ENCODE measurements at regions of chr12 and their contacts with region 1.

Region 1: GRCh38 chr12:401235-402028 is at the start of gene CCDC77:
- DNase-seq: peak; percentile 90
- H3K4me3 ChIP-seq: peak within 1 kb of the TSS; percentile 72 to 79 (median 76)
- H3K27ac ChIP-seq: peak within 1 kb of the TSS; percentile 67
- H3K4me1 ChIP-seq: peaks cover 4% of the 10 kb centered on the region
- H3K27me3 ChIP-seq: no peaks in the 10 kb centered on the region
- CTCF ChIP-seq: peak in 1 of 2 donors; percentile 46
- total RNA-seq, gene CCDC77: 5.3 to 8.8 TPM

Region 2: GRCh38 chr12:356276-356988 is 45.0 kb before region 1 on chr12:
- CTCF ChIA-PET with region 1: no interaction called
- dilution Hi-C with region 1: no loop called
- in situ Hi-C with region 1: no loop called
- intact Hi-C with region 1: no loop called
- DNase-seq: peak; percentile 36
- H3K4me3 ChIP-seq: no peak overlapping the region
- H3K27ac ChIP-seq: no peak overlapping the region
- H3K4me1 ChIP-seq: no peaks in the 10 kb centered on the region
- H3K27me3 ChIP-seq: no peaks in the 10 kb centered on the region
- CTCF ChIP-seq: no peak

Region 3: GRCh38 chr12:414859-415258 is 13.4 kb after region 1 on chr12:
- CTCF ChIA-PET with region 1: interaction called, 11 read pairs
- dilution Hi-C with region 1: no loop called
- in situ Hi-C with region 1: no loop called
- intact Hi-C with region 1: no loop called
- DNase-seq: no peak
- H3K4me3 ChIP-seq: no peak overlapping the region
- H3K27ac ChIP-seq: no peak overlapping the region
- H3K4me1 ChIP-seq: no peaks in the 10 kb centered on the region
- H3K27me3 ChIP-seq: no peaks in the 10 kb centered on the region
- CTCF ChIP-seq: no peak

Region 4: GRCh38 chr12:475291-475690 is 73.9 kb after region 1 on chr12:
- CTCF ChIA-PET with region 1: no interaction called
- dilution Hi-C with region 1: loop called (anchors 5 kb)
- in situ Hi-C with region 1: no loop called
- intact Hi-C with region 1: no loop called
- DNase-seq: no peak
- H3K4me3 ChIP-seq: no peak overlapping the region
- H3K27ac ChIP-seq: no peak overlapping the region
- H3K4me1 ChIP-seq: no peaks in the 10 kb centered on the region
- H3K27me3 ChIP-seq: no peaks in the 10 kb centered on the region
- CTCF ChIP-seq: no peak

Region 5: DNA sequence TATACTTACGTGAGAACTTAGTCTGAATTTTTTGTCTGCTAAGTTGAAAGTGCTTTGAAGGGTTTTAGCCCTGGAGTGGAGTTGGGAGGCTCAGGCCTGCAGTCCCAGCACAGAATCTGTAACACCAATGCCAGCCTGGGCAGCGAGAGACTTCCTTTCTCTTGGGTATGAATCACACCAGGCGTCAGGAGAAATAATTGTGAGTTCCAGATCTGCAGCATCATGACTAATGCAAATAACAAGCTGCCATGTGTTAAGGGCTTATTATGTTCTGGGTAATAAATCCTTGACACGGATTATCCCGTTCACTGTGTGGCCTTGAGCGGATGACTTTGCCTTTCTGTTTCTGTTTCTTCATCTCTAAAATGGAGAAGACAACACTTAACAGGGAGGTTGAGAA is 128.9 kb after region 1 on chr12:
- CTCF ChIA-PET with region 1: no interaction called
- dilution Hi-C with region 1: no loop called
- in situ Hi-C with region 1: no loop called
- intact Hi-C with region 1: no loop called
- DNase-seq: peak; percentile 87
- H3K4me3 ChIP-seq: no peak overlapping the region
- H3K27ac ChIP-seq: no peak overlapping the region
- H3K4me1 ChIP-seq: peaks cover 21% of the 10 kb centered on the region
- H3K27me3 ChIP-seq: no peaks in the 10 kb centered on the region
- CTCF ChIP-seq: no peak

Measured in mammary epithelial cell (primary cell).